WTC11 (cell line): ENCODE measurements at regions of chr19 and their contacts with region 1.

Region 1: GRCh38 chr19:49801966-49802690 is 11.0 kb downstream of the FUZ start:
- DNase-seq: peak; percentile 83
- ATAC-seq: peak; percentile 83
- H3K4me3 Mint-ChIP-seq: peak overlapping the region; percentile 65
- H3K27ac Mint-ChIP-seq: peak overlapping the region; percentile 80
- H3K4me1 Mint-ChIP-seq: peaks cover 19% of the 10 kb centered on the region
- H3K27me3 Mint-ChIP-seq: no peaks in the 10 kb centered on the region
- CTCF ChIP-seq: no peak

Region 2: GRCh38 chr19:49712397-49712859 is 89.7 kb before region 1 on chr19:
- CTCF ChIA-PET with region 1: interaction called, 13 read pairs
- POLR2A ChIA-PET with region 1: interaction called, 4 read pairs
- DNase-seq: peak; percentile 93
- ATAC-seq: peak; percentile 98
- H3K4me3 Mint-ChIP-seq: no peak overlapping the region; the same call in 1 of the 2 replicates
- H3K27ac Mint-ChIP-seq: no peak overlapping the region
- H3K4me1 Mint-ChIP-seq: 0 out of 2 replicates have a peak, but pooled peaks cover 4% of the 10 kb centered on the region
- H3K27me3 Mint-ChIP-seq: no peaks in the 10 kb centered on the region; the same call in 1 of the 2 replicates
- CTCF ChIP-seq: no peak

Region 3: DNA sequence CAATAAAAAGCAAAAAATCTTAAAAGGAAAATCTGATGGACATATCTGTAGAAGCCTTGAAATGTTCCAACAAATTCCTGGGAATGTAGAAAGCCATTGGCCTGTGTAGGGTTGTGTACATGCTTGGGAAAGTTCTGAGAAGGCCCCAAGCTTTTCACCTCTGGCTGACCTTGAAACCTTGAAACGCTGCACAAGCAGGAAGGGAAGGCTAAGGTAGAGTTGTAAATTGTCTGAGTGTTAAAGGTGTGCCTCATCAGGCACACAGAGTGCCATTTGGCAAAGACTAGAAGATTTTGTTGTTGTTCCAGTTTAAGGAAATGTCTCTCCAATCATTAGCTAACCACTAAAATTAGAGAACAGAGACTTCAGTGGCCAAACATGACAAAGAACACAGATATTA is 49.4 kb before region 1 on chr19:
- CTCF ChIA-PET with region 1: interaction called, 11 read pairs
- POLR2A ChIA-PET with region 1: no interaction called
- DNase-seq: no peak
- ATAC-seq: no peak
- H3K4me3 Mint-ChIP-seq: no peak overlapping the region
- H3K27ac Mint-ChIP-seq: no peak overlapping the region
- H3K4me1 Mint-ChIP-seq: peaks cover 3% of the 10 kb centered on the region; the same call in 1 of the 2 replicates
- H3K27me3 Mint-ChIP-seq: peaks cover 18% of the 10 kb centered on the region
- CTCF ChIP-seq: no peak

Region 4: GRCh38 chr19:49766007-49766937 is 35.9 kb before region 1 on chr19:
- CTCF ChIA-PET with region 1: interaction called, 10 read pairs
- POLR2A ChIA-PET with region 1: interaction called, 9 read pairs
- DNase-seq: peak; percentile 99
- ATAC-seq: peak; percentile 89
- H3K4me3 Mint-ChIP-seq: peak overlapping the region; percentile 81
- H3K27ac Mint-ChIP-seq: peak overlapping the region; percentile 100
- H3K4me1 Mint-ChIP-seq: peaks cover 21% of the 10 kb centered on the region
- H3K27me3 Mint-ChIP-seq: no peaks in the 10 kb centered on the region; the same call in 1 of the 2 replicates
- CTCF ChIP-seq: no peak

Region 5: GRCh38 chr19:49812997-49813861 is 11.1 kb after region 1 on chr19 and contains the start of gene FUZ:
- CTCF ChIA-PET with region 1: interaction called, 11 read pairs
- POLR2A ChIA-PET with region 1: interaction called, 5 read pairs
- DNase-seq: peak; percentile 98
- ATAC-seq: peak; percentile 63
- H3K4me3 Mint-ChIP-seq: peak within 1 kb of the TSS; percentile 90
- H3K27ac Mint-ChIP-seq: peak within 1 kb of the TSS; percentile 98
- H3K4me1 Mint-ChIP-seq: peaks cover 26% of the 10 kb centered on the region
- H3K27me3 Mint-ChIP-seq: peaks cover 5% of the 10 kb centered on the region; the same call in 1 of the 2 replicates
- CTCF ChIP-seq: no peak
- total RNA-seq, gene FUZ: 35.1 to 36.3 TPM (median 35.7 TPM) in 3 replicates

Region 6: DNA sequence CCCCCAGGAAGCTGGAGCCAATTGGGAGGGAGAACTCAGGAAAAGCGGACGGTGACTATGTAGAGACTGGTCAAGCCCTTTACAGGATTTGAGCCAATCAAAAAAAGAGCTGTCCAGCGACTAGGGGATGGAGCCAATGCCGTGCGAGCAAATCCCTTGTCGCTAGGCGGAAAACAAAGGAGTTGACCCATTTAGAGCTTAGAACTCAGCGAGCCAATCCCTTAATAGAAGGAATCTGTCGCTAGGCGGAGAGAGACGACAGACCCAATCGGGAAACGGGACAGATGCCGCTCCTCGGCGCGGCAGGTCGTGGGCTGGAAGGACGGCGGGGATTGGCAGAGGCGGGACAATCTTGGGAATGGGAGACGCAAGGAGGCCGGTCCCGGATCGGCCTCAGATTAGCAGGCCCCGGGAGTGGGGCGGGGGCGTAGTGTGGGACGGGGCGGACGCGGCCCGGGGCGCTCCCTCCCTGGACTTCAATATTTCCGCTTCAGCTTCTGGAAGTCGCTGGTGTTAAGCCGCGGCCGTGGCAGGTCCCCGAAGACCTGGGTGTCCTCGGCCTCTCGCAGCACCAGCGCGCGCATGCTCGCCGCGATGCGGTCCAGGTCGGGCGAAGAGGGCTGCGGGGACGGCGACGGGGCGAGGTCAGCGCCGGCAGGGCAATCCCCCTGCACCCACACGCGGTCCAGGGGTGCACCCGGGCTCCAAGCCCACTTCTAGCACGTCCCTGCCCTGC is 67.5 kb after region 1 on chr19:
- CTCF ChIA-PET with region 1: interaction called, 12 read pairs
- POLR2A ChIA-PET with region 1: interaction called, 10 read pairs
- DNase-seq: peak; percentile 97
- ATAC-seq: peak; percentile 82
- H3K4me3 Mint-ChIP-seq: no peak overlapping the region
- H3K27ac Mint-ChIP-seq: peak overlapping the region; percentile 96; the same call in 1 of the 2 replicates
- H3K4me1 Mint-ChIP-seq: peaks cover 25% of the 10 kb centered on the region
- H3K27me3 Mint-ChIP-seq: no peaks in the 10 kb centered on the region
- CTCF ChIP-seq: no peak